ENCODE measurements at regions of chr3 and their contacts with region 1.

Region 1: GRCh38 chr3:50150404-50150750 is 4.7 kb upstream of the SEMA3F start:
- DNase-seq: no peak
- H3K4me3 ChIP-seq: no peak overlapping the region
- H3K27ac ChIP-seq: no peak overlapping the region
- H3K4me1 ChIP-seq: peaks cover 5% of the 10 kb centered on the region
- CTCF ChIP-seq: no peak

Region 2: GRCh38 chr3:49703443-49703927 is 446.9 kb before region 1 on chr3:
- CTCF ChIA-PET with region 1: no interaction called
- POLR2A ChIA-PET with region 1: no interaction called
- intact Hi-C with region 1: no loop called
- DNase-seq: peak; percentile 76
- H3K4me3 ChIP-seq: no peak overlapping the region
- H3K27ac ChIP-seq: no peak overlapping the region
- H3K4me1 ChIP-seq: no peaks in the 10 kb centered on the region
- CTCF ChIP-seq: peak; percentile 81

Region 3: GRCh38 chr3:50185230-50185629 is 34.9 kb after region 1 on chr3:
- CTCF ChIA-PET with region 1: interaction called, 11 read pairs
- POLR2A ChIA-PET with region 1: no interaction called
- intact Hi-C with region 1: no loop called
- DNase-seq: no peak
- H3K4me3 ChIP-seq: no peak overlapping the region
- H3K27ac ChIP-seq: no peak overlapping the region
- H3K4me1 ChIP-seq: no peaks in the 10 kb centered on the region
- CTCF ChIP-seq: no peak